Mucosa of descending colon (tissue), 3 donors: ENCODE measurements at regions of chr1 and their contacts with region 1.

Region 1: DNA sequence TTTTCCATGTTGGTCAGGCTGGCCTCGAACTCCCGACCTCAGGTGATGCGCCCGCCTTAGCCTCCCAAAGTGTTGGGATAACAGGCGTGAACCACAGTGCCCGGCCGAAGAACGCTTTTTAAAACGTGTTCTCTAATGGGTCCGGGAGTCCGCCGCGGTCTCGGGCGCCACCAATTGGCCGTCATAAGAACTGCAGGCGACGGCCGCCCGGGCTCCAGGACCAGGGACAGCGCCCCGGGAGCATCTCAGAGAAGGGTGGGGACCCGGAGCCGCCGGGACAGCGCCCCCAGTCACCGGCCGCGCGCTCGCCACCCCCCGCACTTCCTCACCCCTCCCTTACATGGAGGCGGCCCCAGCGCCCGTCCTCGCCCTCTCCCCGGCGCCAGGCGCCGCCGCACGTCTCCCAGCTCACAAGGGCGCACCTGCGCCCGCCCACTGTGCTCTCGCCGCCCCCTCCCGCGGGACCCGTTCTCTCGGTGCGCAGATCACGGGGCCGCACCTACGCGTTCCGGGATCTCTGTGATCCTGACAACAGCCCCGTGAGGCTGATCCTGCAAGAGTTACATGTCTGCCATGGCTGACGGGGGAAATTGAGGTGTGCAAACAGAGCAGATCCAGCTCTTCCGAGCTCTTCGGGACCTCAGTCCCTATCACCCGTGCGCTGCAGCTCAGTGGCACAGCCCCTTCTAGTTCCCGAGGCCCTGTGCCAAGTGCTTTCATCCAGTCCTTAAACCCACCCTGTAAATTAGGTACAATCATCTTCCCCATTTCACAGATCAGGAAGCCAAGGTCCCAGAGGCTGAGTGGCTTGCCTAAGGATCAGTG is 9.8 kb downstream of the RAP1GAP start:
- DNase-seq: peak; percentile 75 to 85 (median 75)
- ATAC-seq: peak; percentile 95
- H3K4me3 ChIP-seq: no peak overlapping the region
- H3K4me1 ChIP-seq: peaks cover 5% of the 10 kb centered on the region
- CTCF ChIP-seq: peak; percentile 98

Region 2: DNA sequence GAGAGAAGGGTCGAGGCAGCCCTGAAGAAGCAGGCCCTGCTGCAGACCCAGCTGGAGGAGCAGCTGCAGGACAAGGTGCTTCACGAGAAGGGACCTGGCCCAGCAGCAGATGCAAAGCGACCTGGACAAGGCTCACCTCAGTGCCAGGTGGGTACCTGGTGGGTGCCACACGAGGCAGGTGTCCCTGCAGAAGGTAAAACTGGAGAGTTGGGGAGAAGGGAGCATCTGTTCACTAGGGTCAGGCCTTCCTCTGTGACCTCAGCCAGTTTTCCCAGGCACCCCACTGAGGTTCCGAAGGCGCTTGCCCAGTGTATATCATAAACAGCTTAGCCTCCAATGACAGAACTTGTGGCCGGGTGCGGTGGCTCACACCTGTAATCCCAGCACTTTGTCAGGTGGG is 224.9 kb before region 1 on chr1:
- intact Hi-C with region 1: no loop called
- DNase-seq: no peak
- ATAC-seq: no peak
- H3K4me3 ChIP-seq: no peak overlapping the region
- H3K4me1 ChIP-seq: no peaks in the 10 kb centered on the region
- CTCF ChIP-seq: no peak

Region 3: DNA sequence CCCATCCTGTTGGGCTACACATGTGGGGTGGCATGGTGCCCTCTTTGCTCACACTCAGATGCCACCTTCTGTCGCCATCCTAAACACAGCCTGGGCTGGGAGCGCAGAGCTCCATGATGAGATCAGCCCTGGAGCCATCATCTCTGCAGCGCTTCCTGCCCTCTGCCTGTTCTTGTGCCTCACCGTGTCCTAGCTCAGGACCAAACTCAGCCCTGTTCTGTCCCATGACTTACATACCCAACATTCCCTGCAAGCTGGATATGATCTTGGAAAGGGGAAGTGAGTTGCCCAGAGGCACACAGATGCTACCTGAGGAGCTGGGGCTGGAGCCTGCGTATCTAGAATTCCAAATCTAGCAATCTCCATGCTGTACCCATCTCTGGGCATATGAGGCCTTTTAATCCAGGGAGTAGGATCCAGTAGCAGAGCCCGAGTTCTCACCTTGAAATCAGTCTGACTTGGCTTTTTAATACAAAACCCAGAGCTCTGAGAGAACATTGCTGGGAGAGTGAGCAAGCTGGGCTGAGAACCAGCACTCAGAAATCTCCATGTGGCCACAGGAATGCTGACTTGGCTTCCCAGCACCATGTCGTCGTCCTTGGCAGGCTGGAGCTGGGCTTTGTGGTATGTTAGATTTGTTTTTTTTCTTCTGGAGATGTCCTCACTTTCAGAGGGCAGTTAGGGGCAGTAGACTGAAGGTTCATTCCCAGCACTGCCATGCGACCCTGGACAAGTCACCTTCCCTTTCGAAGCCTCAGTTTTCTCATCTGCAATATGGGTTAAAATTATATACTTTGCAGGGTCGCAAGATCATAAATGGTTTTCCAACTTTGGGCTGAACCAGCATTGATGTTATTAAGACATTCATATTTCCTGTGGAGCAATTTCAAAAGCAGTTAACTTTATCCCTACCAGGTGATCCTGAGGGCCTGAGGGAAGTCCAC is 147.5 kb before region 1 on chr1:
- intact Hi-C with region 1: loop called in 1 of 2 experiments (anchors 10 kb)
- DNase-seq: peak; percentile 38 to 70 (median 54)
- ATAC-seq: peak; percentile 13
- H3K4me3 ChIP-seq: no peak overlapping the region
- H3K4me1 ChIP-seq: peaks cover 7% of the 10 kb centered on the region
- CTCF ChIP-seq: no peak

Region 4: DNA sequence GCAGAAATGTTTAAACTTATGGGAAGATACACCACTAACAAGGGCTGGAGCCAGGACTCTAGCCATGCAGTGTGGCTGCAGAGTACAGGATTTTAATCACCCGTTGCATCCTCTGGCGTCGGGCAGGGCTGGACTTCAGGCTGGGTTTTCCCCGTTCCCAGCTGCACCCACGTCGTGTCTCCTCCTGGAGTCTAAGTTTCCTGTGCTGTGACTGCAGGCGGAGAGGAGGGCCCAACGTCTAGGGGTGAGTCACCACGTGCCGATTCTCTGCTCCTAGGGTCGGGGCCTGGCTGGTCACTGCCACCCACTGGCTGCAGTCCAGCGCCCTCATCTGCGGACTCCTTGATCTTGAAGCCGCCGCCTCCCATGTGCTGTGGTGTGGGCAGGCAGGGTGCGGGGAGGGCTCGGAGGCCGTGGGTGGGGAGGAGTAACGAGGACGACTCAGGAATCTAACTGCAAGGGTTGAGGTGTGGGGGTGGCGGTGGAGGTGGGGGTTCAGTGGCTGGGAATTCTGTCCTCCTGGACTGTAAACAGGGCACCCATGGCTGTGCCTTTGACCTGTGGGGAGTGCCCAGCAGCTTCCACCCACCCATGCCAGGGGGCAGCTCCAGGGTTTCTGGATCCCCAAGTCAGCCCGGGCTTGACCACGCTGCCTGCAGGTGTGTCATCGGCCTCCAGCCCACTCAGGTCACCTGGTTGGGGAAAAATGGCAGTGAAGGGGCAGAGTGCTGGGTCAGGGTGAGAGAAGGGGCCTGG is 72.3 kb before region 1 on chr1:
- intact Hi-C with region 1: loop called in 1 of 2 experiments (anchors 2 kb)
- DNase-seq: peak; percentile 39 to 73 (median 46)
- ATAC-seq: peak; percentile 87
- H3K4me3 ChIP-seq: no peak overlapping the region
- H3K4me1 ChIP-seq: peaks cover 5% of the 10 kb centered on the region
- CTCF ChIP-seq: no peak